Aorta (tissue), 5 donors: ENCODE measurements at regions of chr18 and their contacts with region 1.

Region 1: GRCh38 chr18:25310045-25310444 is 41.9 kb downstream of the ZNF521 start:
- DNase-seq: no peak
- ATAC-seq: no peak
- H3K4me3 ChIP-seq: no peak overlapping the region
- H3K27ac ChIP-seq: no peak overlapping the region
- H3K4me1 ChIP-seq: no peaks in the 10 kb centered on the region
- H3K27me3 ChIP-seq: no peaks in the 10 kb centered on the region

Region 2: DNA sequence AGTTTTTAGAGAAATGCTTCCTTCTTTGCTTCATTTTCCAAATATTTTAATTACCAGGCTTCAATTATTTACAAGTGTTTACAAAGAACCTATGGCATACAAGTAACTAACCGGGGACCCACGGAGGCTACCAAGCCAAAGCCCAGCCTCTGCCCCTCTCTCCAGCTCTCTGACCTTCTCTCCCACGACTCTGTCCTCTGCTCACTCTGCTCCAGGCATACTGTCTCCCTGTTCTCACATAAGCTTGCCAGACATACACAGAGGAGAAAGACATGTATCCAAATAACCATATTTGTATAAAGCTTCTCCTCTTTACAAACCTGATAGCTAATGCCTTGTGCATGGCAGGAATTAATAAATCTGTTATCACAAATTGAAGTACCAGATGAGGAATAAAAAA is 99.4 kb before region 1 on chr18:
- intact Hi-C with region 1: no loop called
- DNase-seq: no peak
- ATAC-seq: no peak
- H3K4me3 ChIP-seq: no peak overlapping the region
- H3K27ac ChIP-seq: no peak overlapping the region
- H3K4me1 ChIP-seq: no peaks in the 10 kb centered on the region
- H3K27me3 ChIP-seq: no peaks in the 10 kb centered on the region

Region 3: GRCh38 chr18:25223211-25223610 is 86.8 kb before region 1 on chr18:
- intact Hi-C with region 1: no loop called
- DNase-seq: no peak
- ATAC-seq: no peak
- H3K4me3 ChIP-seq: no peak overlapping the region
- H3K27ac ChIP-seq: no peak overlapping the region
- H3K4me1 ChIP-seq: no peaks in the 10 kb centered on the region
- H3K27me3 ChIP-seq: no peaks in the 10 kb centered on the region

Region 4: DNA sequence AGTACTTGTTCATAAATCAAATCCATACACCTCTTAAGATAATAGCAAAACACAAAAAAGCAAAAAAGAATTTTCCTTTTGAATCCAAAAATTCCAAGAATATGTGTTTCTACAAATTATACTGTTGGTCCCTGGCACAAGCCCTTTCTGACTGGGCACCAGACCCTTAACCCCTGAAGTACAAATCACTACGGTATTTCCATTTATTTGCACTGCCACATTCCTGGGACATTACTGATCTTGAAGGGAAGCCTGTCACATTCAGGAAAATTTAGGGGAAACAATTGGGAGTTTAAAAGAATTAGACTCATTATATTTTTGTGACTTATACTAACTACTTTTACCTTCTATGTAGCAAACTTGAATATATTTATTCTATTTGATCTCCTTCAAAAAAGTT is 56.9 kb before region 1 on chr18:
- intact Hi-C with region 1: loop called in 1 of 2 experiments (anchors 10 kb)
- DNase-seq: no peak
- ATAC-seq: no peak
- H3K4me3 ChIP-seq: no peak overlapping the region
- H3K27ac ChIP-seq: no peak overlapping the region
- H3K4me1 ChIP-seq: no peaks in the 10 kb centered on the region
- H3K27me3 ChIP-seq: peaks cover 0 to 5% of the 10 kb centered on the region in 2 donors